Activated naive CD4-positive, alpha-beta T cell treated with anti-CD3 and anti-CD28 coated beads for 36 hours (primary cell): ENCODE measurements at regions of chr11 and their contacts with region 1.

Region 1: DNA sequence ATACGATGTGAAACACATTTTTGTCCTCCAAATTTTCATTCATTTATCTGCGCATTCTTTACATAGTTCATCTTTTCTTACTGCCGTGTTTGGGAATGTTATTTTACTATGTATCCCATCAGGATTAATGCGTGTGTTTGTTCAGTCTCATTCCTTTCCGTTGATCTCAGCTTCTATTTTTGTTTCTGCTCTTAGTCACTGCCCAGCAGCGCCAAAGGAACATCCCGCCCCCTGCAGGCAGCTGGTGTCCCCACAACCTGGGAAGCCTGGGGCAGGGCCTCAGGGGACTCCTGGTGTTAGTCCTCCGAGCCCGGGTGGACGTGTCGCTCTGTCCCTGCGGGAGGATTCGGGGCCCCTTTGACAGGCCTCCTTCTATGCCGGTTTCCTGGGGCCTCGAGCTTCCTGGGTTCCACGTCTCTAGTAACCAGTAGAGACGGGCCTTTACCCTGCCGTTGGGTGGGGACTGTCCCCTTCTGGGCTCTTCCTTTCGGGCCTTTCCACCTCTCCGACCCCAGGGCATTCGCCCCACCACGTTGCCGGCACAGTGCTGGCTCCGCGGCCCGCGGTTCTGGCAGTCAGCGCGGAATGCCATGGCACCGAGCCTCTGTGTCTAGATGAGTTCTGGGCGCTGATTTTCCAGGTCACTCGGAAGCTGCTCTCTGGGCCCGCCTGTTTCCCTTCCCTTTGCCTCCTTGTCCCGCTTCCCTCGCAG is 39.8 kb downstream of the WEE1 start:
- DNase-seq: peak; percentile 94
- H3K4me3 Mint-ChIP-seq: peak overlapping the region; percentile 86
- H3K27ac Mint-ChIP-seq: peak overlapping the region; percentile 98
- H3K4me1 Mint-ChIP-seq: peaks cover 38% of the 10 kb centered on the region
- H3K27me3 Mint-ChIP-seq: no peaks in the 10 kb centered on the region

Region 2: DNA sequence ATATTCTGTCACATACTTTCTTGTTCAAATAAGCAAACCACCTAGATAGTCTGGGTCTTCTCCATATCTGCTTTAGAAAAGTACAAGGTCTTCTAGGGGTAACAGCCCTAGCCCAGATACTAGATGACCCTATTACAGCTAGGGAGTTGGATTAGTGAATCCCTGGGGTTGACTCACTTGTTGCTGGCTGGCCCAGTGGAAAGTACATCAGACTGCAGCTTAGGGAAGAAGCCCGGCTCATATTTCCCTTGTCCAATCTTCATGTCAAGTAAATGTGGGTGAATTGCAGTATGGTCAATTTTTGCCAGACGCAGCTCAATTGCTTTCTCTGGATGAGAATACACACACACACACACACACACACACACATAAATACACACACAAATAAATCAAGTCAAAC is 442.8 kb before region 1 on chr11:
- CTCF ChIA-PET with region 1: no interaction called
- intact Hi-C with region 1: loop called (anchors 2 kb)
- DNase-seq: no peak
- H3K4me3 Mint-ChIP-seq: no peak overlapping the region
- H3K27ac Mint-ChIP-seq: no peak overlapping the region
- H3K4me1 Mint-ChIP-seq: peaks cover 15% of the 10 kb centered on the region
- H3K27me3 Mint-ChIP-seq: no peaks in the 10 kb centered on the region

Region 3: DNA sequence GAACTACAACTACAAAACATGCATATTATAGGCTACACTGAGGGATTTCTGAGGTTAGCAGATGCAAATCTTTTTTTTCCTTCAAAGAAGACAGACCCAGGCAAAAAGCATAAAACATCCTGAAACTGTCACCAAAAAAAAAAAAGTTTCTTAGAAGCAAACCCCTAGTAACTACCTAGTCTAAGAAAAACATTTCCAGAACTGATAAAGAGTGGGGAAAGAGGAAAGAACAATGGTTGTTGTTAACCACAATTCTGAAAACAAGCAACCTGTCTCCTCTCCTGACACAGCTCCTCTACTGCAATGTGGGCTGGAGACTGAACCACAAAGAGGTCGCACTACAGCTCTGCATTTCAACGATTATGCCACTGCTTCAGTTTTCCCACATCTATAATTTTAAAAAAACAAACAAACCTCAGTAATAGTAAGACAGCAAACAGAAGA is 363.1 kb before region 1 on chr11:
- CTCF ChIA-PET with region 1: no interaction called
- intact Hi-C with region 1: no loop called
- DNase-seq: peak; percentile 52
- H3K4me3 Mint-ChIP-seq: no peak overlapping the region
- H3K27ac Mint-ChIP-seq: peak overlapping the region; percentile 56
- H3K4me1 Mint-ChIP-seq: peaks cover 70% of the 10 kb centered on the region
- H3K27me3 Mint-ChIP-seq: no peaks in the 10 kb centered on the region

Region 4: GRCh38 chr11:9473408-9473807 is 139.9 kb before region 1 on chr11:
- CTCF ChIA-PET with region 1: no interaction called
- intact Hi-C with region 1: no loop called
- DNase-seq: no peak
- H3K4me3 Mint-ChIP-seq: no peak overlapping the region
- H3K27ac Mint-ChIP-seq: no peak overlapping the region
- H3K4me1 Mint-ChIP-seq: no peaks in the 10 kb centered on the region
- H3K27me3 Mint-ChIP-seq: no peaks in the 10 kb centered on the region

Region 5: DNA sequence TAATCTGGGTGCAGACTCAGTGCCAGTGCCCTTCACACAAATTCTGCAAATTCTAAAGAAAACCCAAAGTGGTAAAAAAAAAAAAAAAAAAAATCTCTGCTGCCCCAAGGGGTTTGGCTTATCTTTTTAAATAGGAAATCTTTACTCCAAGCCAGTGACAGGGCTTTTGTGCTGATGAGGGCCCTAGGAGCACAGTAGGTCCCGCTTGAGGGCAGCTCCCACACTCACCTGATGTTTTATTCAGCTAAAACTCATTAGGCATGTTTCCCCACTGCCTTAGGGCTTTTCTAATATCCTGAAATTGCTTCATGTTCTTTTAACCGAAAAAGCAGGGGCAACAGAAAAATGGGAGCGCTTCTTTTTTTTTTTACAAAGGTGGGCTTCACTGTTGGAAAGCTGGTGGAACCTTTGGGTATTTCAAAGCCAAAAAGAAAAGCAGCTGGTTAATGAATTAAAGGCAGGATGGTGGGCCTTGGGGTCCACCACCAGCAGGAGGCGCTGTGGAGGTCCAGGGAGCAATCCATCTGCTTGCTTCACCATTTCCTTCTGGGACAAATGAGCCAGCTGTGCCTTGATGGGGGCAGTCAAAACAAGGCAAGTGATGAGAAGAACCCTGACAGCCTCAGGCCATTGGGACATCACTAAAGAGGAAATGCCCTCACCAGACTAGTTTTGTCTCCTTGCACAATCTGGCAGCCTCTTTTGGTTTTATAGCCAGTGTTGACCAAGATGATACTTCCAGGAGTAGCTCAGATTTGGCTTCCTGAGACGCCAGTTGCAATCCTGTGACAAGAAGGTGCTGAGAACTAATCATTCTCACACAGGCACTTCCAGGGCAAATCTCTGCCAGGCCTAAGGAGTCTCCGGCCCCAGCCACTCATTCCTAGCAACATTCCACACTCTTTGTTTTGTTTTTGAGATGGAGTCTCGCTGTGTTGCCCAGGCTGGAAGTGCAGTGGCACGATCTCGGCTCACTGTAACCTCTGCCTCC is 78.2 kb before region 1 on chr11:
- CTCF ChIA-PET with region 1: interaction called, 52 read pairs
- intact Hi-C with region 1: loop called (anchors 1 kb)
- DNase-seq: peak; percentile 87
- H3K4me3 Mint-ChIP-seq: no peak overlapping the region
- H3K27ac Mint-ChIP-seq: no peak overlapping the region
- H3K4me1 Mint-ChIP-seq: no peaks in the 10 kb centered on the region
- H3K27me3 Mint-ChIP-seq: no peaks in the 10 kb centered on the region

Region 6: GRCh38 chr11:9601037-9601875 is 12.0 kb before region 1 on chr11:
- CTCF ChIA-PET with region 1: interaction called, 64 read pairs
- intact Hi-C with region 1: loop called (anchors 1 kb)
- DNase-seq: peak; percentile 90
- H3K4me3 Mint-ChIP-seq: peak overlapping the region; percentile 67
- H3K27ac Mint-ChIP-seq: peak overlapping the region; percentile 84
- H3K4me1 Mint-ChIP-seq: peaks cover 27% of the 10 kb centered on the region
- H3K27me3 Mint-ChIP-seq: peaks cover 2% of the 10 kb centered on the region

Region 7: DNA sequence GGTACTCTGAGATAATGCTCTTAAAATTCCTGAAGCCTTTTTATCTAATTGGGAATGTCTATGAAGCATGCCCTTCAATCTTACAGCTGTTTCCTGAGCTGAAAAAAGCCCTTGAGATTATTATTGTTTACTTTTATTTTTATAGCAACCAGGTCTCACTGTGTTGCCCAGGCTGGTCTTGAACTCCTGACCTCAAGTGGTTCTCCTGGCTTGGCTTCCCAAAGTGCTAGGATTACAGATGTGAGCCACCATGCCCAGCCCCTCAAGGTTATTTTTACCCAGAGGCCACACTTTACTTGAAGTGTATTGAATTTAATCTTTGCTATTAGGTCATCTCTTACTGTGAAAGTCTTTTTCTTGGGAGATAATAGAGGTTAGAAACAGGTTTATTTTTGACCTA is 43.6 kb after region 1 on chr11:
- CTCF ChIA-PET with region 1: no interaction called
- intact Hi-C with region 1: no loop called
- DNase-seq: no peak
- H3K4me3 Mint-ChIP-seq: no peak overlapping the region
- H3K27ac Mint-ChIP-seq: no peak overlapping the region
- H3K4me1 Mint-ChIP-seq: no peaks in the 10 kb centered on the region
- H3K27me3 Mint-ChIP-seq: peaks cover 13% of the 10 kb centered on the region

Region 8: GRCh38 chr11:9716275-9717039 is 103.2 kb after region 1 on chr11:
- CTCF ChIA-PET with region 1: interaction called, 5 read pairs
- intact Hi-C with region 1: loop called (anchors 1 kb)
- DNase-seq: peak; percentile 41
- H3K4me3 Mint-ChIP-seq: no peak overlapping the region
- H3K27ac Mint-ChIP-seq: peak overlapping the region; percentile 66
- H3K4me1 Mint-ChIP-seq: peaks cover 29% of the 10 kb centered on the region
- H3K27me3 Mint-ChIP-seq: peaks cover 4% of the 10 kb centered on the region

Region 9: DNA sequence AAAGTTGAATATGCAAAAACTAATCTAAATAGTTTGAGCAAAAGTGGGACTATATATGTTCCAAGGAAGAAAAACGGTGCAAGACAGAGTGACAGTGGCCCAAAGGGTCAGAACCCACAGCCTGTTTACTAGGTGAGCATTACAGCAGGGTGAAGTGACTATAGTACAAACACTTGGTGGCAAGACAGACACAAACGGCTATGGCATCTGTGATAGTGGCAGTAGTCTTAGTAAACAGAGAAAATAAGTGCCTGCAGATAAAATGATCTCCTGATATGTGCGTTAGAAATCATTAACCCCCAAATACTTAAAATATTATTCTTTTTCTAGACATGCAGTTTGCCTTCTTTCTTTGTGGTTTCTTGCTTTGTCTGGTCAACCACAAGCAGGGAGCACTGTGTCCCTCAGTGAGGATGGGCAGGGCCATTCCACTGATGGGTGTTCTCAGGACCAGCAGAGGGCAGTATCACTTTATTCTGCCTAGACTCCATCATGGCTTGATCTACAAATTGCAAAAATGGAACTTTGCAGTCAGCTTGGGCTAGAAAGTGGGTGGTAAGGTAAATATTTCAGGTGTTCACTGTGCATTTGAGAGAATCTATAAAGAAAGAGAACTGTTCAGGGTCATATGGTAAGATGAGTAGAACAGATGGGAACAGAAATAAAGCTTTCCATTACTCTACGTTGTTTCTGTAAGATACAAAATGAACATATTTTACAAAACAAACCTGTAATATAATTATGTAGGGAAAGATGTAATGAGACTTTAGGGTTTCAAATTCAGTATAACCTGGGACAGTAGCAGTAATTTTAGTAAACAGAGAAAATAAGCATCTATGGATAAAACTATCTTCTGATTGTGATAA is 248.8 kb after region 1 on chr11:
- CTCF ChIA-PET with region 1: interaction called, 4 read pairs
- intact Hi-C with region 1: loop called (anchors 2 kb)
- DNase-seq: peak; percentile 71
- H3K4me3 Mint-ChIP-seq: no peak overlapping the region
- H3K27ac Mint-ChIP-seq: no peak overlapping the region
- H3K4me1 Mint-ChIP-seq: peaks cover 30% of the 10 kb centered on the region
- H3K27me3 Mint-ChIP-seq: no peaks in the 10 kb centered on the region

Region 10: DNA sequence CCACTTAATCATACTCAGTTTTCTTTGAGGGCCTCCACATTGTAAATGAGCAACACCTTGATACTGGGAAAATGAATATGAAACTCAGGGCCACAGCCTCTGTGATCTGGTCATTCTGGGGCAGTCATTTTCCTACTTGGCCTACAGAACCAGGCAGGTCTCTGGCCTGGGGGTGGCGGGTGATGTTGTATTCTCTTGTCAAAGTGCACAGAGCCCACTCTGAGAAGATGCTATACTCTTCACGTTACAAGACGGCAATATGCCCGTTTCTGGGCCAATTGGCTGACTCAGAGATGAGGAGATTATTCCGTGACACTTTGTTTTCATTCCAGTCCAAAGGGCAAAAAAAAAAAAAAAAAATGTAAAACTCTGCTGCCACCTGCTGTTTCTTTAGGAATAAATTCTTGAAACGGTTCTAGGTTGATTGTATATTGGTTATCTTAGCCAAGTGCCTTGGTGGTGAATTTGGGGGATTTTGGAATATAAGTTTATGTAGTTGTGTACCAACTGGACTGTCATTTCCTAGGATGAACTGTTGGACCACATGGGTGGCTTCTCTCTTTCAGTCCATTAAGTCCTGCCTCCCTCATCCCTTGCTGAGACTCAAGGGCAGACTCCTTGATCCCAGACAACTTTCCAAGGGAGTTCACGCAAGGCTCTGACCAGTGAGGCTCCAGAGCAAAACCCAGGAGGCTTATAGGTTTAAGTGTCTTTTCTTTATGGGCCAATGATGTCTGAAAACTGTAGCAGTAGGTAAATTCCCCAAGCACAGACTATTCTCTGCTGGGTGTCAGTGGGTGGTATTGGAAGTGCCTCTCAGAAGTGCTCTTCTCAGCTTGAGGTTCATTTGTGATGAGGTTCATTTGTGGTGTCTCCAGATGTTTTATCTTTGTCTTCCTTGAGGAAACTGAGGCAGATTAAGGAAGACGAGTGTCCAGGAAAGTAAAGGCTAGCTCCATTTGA is 709.8 kb after region 1 on chr11:
- CTCF ChIA-PET with region 1: no interaction called
- intact Hi-C with region 1: loop called (anchors 5 kb)
- DNase-seq: peak; percentile 69
- H3K4me3 Mint-ChIP-seq: peak overlapping the region; percentile 38
- H3K27ac Mint-ChIP-seq: peak overlapping the region; percentile 69
- H3K4me1 Mint-ChIP-seq: peaks cover 12% of the 10 kb centered on the region
- H3K27me3 Mint-ChIP-seq: no peaks in the 10 kb centered on the region